Lower lobe of right lung (tissue), 2 donors: ENCODE measurements at regions of chr7 and their contacts with region 1.

Region 1: GRCh38 chr7:64619705-64620104 is 46.2 kb upstream of the ZNF107 start:
- DNase-seq: no peak
- ATAC-seq: no peak
- H3K4me3 ChIP-seq: no peak overlapping the region
- H3K27ac ChIP-seq: no peak overlapping the region
- H3K4me1 ChIP-seq: no peaks in the 10 kb centered on the region
- H3K27me3 ChIP-seq: no peaks in the 10 kb centered on the region
- CTCF ChIP-seq: no peak

Region 2: GRCh38 chr7:64183126-64183742 is 436.5 kb before region 1 on chr7:
- intact Hi-C with region 1: loop called (anchors 5 kb)
- DNase-seq: peak; percentile 54
- ATAC-seq: peak; percentile 54 to 59
- H3K4me3 ChIP-seq: no peak overlapping the region
- H3K27ac ChIP-seq: no peak overlapping the region
- H3K4me1 ChIP-seq: no peaks in the 10 kb centered on the region
- H3K27me3 ChIP-seq: peaks cover 31% of the 10 kb centered on the region
- CTCF ChIP-seq: peak; percentile 92